Activated T-helper 2 cell treated with anti-CD3 and anti-CD28 coated beads, Interferon-gamma antibody, Interleukin-2, Interleukin-4, amounts not matched to agents 10 μg/mL and 5 μg/mL and 100 μg/mL, durations not matched to agents 14 hours and 24 hours and 36 hours (primary cell): ENCODE measurements at regions of chr19 and their contacts with region 1.

Region 1: DNA sequence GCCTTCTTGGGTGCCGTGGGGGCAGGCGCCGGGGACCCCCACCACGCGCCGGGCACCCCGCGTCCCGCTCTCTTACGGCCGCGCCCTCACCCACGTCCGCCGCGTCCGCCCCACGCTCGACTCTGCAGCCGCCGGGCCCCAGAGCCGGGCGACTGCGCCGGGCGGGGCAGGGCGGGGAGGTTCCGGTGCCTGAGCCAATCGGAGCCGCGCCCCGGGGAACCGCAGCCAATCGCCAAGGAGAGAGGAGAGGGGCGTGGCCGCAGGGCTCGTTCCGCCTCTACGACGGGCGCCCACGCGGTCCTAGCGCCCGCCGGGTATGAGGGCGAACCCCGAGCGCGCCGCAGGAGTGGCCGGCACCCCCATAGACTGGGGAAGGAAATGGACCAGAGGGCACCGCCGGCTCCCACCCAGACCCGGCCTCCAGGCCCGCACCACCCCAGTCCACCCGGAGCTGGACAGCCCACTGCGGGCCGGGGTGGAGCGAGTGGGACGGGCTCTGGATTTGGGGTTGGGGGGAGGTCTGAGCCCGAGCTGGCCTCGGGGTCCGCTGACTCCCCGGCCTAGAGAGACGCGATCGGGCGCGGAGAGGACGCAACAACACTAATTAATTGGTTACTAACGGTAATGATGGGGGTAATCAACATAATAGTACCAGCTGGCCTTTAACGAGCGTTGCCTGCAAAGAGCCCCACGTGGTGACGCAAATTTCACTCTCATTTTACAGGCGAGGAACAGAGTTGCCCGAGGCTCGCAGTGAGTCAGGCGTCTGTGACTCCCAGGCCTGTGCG is at the start of gene MFSD12:
- DNase-seq: peak; percentile 94
- H3K4me3 Mint-ChIP-seq: peak within 1 kb of the TSS; percentile 98
- H3K27ac Mint-ChIP-seq: peak within 1 kb of the TSS; percentile 85
- H3K4me1 Mint-ChIP-seq: peaks cover 33% of the 10 kb centered on the region
- H3K27me3 Mint-ChIP-seq: no peaks in the 10 kb centered on the region
- total RNA-seq, gene MFSD12: 93.7 and 94.1 TPM in 2 replicates

Region 2: DNA sequence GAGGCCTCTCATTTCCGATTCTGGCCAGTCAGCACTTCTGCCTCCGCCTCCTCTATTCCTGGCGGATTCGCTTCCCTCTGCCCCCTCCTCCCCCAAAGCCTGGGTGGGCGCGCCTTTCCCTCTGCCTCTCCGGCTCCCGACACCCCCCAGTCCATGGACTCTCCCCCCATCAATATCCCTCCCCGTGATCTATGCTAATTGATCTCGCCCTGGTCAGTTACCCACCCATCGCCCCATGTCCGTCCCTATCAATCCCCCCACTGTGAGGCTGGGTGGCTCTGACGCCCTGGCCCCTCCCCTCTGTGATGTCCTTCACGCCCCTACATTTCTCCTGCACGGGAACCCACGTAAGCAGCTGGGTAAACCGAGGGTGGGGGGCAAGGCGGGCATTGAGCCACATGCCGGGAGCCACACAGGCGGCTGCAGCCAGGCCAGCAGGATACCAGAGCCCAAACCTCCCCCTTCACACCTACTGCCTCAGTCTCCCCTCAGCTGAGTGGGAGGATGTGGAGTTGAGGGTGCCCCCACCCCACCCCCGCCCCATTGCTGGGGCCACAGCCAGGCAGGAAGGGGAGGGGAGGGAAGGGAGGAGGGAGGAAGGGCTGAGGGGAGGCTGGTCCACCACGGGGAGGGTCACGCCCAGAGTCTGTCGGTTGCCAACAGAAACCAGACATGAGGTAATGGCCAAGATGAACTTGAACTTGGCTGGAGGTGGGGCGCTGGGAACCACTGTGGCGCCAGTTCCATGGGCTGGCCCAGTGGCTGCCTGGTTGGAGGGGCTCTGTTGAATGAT is 98.4 kb before region 1 on chr19:
- intact Hi-C with region 1: no loop called
- DNase-seq: no peak
- H3K4me3 Mint-ChIP-seq: no peak overlapping the region
- H3K27ac Mint-ChIP-seq: no peak overlapping the region
- H3K4me1 Mint-ChIP-seq: no peaks in the 10 kb centered on the region
- H3K27me3 Mint-ChIP-seq: no peaks in the 10 kb centered on the region

Region 3: GRCh38 chr19:3494051-3494450 is 63.6 kb before region 1 on chr19:
- intact Hi-C with region 1: no loop called
- DNase-seq: no peak
- H3K4me3 Mint-ChIP-seq: peak overlapping the region; percentile 21
- H3K27ac Mint-ChIP-seq: no peak overlapping the region
- H3K4me1 Mint-ChIP-seq: peaks cover 5% of the 10 kb centered on the region
- H3K27me3 Mint-ChIP-seq: no peaks in the 10 kb centered on the region

Region 4: GRCh38 chr19:3505598-3506383 is 51.9 kb before region 1 on chr19 and contains the start of gene FZR1:
- intact Hi-C with region 1: loop called (anchors 2 kb)
- DNase-seq: peak; percentile 99
- H3K4me3 Mint-ChIP-seq: peak within 1 kb of the TSS; percentile 93
- H3K27ac Mint-ChIP-seq: peak within 1 kb of the TSS; percentile 96
- H3K4me1 Mint-ChIP-seq: peaks cover 37% of the 10 kb centered on the region
- H3K27me3 Mint-ChIP-seq: no peaks in the 10 kb centered on the region
- total RNA-seq, gene FZR1: 44.3 and 49.2 TPM in 2 replicates

Region 5: DNA sequence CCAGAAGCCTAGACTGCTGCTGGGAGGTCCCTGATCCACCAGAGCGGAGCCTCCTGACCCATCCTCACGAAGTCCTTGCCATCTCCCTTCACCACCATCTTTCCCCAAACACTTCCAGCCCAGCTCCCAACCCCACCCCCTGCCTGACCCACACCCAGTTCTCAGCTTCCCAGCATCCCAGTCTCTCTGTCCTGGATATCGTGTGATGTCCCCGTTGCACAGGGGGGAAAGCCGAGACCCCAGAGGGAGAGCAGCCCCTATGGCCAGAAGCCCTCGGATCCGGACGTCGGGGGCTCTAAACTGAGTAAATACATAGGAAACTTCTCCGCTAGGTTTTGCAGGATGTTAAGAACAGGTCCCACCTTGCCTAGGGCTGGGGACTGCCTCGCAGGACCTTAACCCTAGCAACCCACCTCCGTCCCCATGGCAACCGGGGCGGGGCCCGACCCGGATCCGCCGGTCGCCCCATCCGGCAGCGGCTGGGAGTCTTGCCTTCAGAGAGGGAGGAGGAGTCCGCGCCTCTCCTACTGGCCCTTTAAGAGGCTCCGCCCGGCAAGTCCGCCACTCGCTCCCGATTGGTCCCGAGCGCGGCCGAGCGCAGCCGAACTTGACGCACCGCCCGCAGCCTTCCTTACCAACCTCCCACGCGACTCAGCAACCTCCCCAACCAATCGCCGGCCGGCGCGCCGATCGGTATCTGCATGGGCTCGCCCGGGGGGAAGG is 14.6 kb after region 1 on chr19:
- intact Hi-C with region 1: loop called (anchors 1 kb)
- DNase-seq: peak; percentile 99
- H3K4me3 Mint-ChIP-seq: peak overlapping the region; percentile 71
- H3K27ac Mint-ChIP-seq: peak overlapping the region; percentile 52
- H3K4me1 Mint-ChIP-seq: peaks cover 8% of the 10 kb centered on the region
- H3K27me3 Mint-ChIP-seq: no peaks in the 10 kb centered on the region

Region 6: GRCh38 chr19:3626473-3627350 is 69.1 kb after region 1 on chr19 and contains the start of gene CACTIN:
- intact Hi-C with region 1: loop called (anchors 5 kb)
- DNase-seq: peak; percentile 97
- H3K4me3 Mint-ChIP-seq: peak within 1 kb of the TSS; percentile 96
- H3K27ac Mint-ChIP-seq: peak within 1 kb of the TSS; percentile 97
- H3K4me1 Mint-ChIP-seq: peaks cover 20% of the 10 kb centered on the region
- H3K27me3 Mint-ChIP-seq: no peaks in the 10 kb centered on the region
- total RNA-seq, gene CACTIN: 32.8 and 36.2 TPM in 2 replicates